Psoas muscle (tissue), 8 donors: ENCODE measurements at regions of chr2 and their contacts with region 1.

Region 1: GRCh38 chr2:187442378-187442777 is 5.7 kb downstream of the CALCRL start:
- DNase-seq: no peak
- ATAC-seq: no peak
- H3K4me3 ChIP-seq: no peak overlapping the region
- H3K27ac ChIP-seq: no peak overlapping the region
- H3K4me1 ChIP-seq: no peaks in the 10 kb centered on the region
- H3K27me3 ChIP-seq: no peaks in the 10 kb centered on the region
- CTCF ChIP-seq: no peak

Region 2: DNA sequence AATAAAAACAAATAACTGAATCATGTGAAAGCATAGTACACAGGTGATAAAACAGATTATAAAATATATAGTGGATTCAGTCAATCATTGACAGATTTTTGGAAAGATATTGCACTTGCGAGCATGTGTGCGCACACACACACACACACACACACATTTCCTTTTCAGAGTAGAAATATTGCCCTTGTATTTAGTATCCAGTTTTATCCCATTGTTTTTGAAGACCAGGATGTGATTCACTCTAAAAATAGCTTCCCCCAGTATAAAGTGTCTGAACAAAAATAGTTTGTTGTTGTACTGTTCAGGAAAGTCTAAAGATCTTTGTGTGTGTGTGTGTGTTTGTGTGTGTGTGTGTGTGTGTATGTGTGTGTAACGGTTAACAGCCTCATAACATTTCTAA is 139.8 kb before region 1 on chr2:
- intact Hi-C with region 1: loop called in 1 of 2 experiments (anchors 10 kb)
- DNase-seq: no peak
- ATAC-seq: no peak
- H3K4me3 ChIP-seq: no peak overlapping the region
- H3K27ac ChIP-seq: no peak overlapping the region
- H3K4me1 ChIP-seq: no peaks in the 10 kb centered on the region
- H3K27me3 ChIP-seq: no peaks in the 10 kb centered on the region
- CTCF ChIP-seq: no peak